ENCODE measurements at regions of chr11 and their contacts with region 1.

Region 1: DNA sequence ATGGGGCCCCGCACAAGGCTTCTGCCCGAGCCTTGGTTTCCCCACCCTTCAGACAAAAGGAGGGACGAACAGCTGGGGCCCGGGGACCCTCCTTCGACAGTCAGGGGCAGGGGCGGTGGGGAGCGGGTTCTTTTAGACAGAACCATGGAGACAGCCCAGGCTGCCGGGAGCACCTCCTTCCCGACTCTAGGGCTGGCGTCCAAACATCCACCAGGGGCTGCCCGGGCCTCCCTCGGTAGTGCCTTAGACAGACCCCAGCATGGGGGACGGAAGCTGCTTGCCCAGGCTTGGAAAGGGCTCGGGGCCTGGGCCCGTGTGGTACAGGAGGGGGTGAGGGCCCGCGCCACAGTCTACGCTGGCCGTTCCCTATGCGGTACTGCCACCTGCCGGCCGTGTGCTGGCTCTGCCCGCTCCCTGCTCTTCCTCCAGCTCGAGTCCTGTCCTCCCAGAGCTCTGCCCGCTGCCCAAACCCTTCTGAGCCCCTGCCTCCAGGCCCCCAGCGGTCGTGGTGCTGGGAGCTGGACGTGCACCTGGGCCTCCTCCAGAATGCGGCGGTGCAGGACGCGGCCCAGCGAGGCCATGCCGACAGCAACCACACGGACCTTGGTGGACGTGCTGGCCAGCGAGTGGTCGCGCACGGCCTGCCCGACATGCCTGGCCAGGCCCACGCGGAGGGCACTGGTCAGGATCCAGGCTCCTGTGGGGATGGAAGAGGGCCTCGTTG is 20.1 kb downstream of the TSSC4 start:
- DNase-seq: no peak
- ATAC-seq: peak; percentile 96
- H3K4me3 ChIP-seq: peak overlapping the region; percentile 3 to 42; a peak in 2 of 4 replicates
- H3K27ac ChIP-seq: peak overlapping the region; percentile 23; the same call in 1 of the 2 replicates
- H3K4me1 ChIP-seq: peaks cover 7% of the 10 kb centered on the region; the same call in 1 of the 2 replicates
- H3K27me3 ChIP-seq: no peaks in the 10 kb centered on the region
- CTCF ChIP-seq: peak; percentile 99

Region 2: GRCh38 chr11:1733716-1734640 is 686.7 kb before region 1 on chr11:
- CTCF ChIA-PET with region 1: no interaction called
- POLR2A ChIA-PET with region 1: no interaction called
- in situ Hi-C with region 1: no loop called
- intact Hi-C with region 1: no loop called
- DNase-seq: no peak
- ATAC-seq: peak; percentile 20
- H3K4me3 ChIP-seq: no peak overlapping the region
- H3K27ac ChIP-seq: no peak overlapping the region
- H3K4me1 ChIP-seq: no peaks in the 10 kb centered on the region
- H3K27me3 ChIP-seq: peaks cover 5% of the 10 kb centered on the region; the same call in 1 of the 2 replicates
- CTCF ChIP-seq: no peak

Region 3: DNA sequence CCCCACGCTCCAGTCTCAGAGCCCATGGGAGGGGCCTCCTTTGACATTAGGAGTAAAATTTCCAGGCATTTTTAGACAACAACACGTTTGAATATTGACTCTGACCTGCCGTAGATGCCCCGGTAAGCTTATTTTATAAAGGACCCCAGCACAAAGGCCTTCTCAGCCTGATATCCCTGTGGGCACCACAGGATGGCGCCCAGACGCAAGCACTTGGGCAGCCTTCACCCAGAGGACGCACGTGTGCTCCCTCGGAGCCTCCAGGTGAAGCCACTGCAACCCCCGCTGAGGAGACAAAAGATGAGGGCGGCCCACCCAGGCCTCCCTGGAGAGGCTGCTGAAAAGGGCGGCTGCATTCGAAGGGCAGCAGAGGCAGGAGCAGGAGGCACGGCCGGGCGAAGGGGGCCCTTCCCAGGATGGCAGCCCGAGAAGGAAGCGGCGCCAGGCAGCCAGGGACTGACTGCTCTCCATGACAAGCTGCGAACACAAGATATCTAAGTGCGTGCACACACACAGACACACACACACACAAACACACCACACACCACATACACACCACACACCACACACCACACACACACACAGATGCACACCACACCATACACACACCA is 233.9 kb before region 1 on chr11:
- CTCF ChIA-PET with region 1: interaction called, 17 read pairs
- POLR2A ChIA-PET with region 1: no interaction called
- in situ Hi-C with region 1: no loop called
- intact Hi-C with region 1: no loop called
- DNase-seq: no peak
- ATAC-seq: peak; percentile 85
- H3K4me3 ChIP-seq: no peak overlapping the region
- H3K27ac ChIP-seq: no peak overlapping the region
- H3K4me1 ChIP-seq: 0 out of 2 replicates have a peak, but pooled peaks cover 3% of the 10 kb centered on the region
- H3K27me3 ChIP-seq: no peaks in the 10 kb centered on the region
- CTCF ChIP-seq: peak; percentile 97

Region 4: DNA sequence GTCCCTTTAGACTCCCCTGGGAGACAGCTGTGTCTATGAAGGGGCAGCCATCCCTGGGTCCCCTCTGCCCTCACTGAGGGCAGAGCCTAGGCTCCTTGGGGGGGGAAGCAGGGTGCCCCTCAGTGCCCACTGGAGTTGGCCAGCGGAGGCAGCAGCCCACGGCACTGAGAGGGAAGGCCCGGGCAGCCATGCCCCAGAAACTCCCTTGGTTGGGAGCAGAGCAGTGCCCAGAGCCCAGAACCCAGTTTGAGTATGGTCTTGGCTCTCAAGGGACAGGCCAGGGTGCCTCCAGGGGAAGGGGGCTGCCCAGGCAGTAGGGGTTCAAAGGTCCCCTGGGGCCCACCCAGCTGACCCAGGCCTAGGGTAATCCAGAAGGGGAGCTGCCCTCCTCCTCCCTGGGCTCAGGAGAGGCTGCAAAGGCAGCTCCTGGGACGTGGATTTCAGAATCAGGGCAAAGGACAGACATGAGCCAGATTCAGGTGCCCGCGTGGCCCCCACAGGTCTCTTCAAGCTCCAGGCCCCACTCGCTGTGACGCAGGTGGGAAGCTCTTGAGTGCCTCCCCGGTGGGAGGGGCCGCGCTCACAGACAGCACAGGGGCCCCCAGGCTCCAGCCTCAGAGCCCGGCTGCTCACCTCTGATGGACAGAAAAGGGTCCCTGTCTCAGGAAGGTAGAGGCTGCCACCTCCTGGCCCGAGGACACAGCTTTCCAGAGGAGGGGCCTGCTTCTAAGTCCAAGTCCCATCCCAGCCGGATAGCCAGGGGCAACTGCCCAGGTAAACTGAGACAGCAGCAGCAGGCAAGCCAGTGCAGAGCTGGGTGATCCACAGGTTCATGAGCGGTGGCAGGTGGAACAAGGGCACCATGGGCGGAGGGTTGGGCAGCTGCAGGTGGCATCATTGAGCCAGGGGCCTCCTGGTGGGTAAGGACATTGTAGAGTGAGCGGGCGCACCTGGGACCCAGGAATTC is 121.6 kb before region 1 on chr11:
- CTCF ChIA-PET with region 1: interaction called, 102 read pairs
- POLR2A ChIA-PET with region 1: no interaction called
- in situ Hi-C with region 1: no loop called
- intact Hi-C with region 1: no loop called
- DNase-seq: no peak
- ATAC-seq: peak; percentile 82
- H3K4me3 ChIP-seq: no peak overlapping the region
- H3K27ac ChIP-seq: no peak overlapping the region
- H3K4me1 ChIP-seq: no peaks in the 10 kb centered on the region
- H3K27me3 ChIP-seq: peaks cover 5% of the 10 kb centered on the region; the same call in 1 of the 2 replicates
- CTCF ChIP-seq: peak; percentile 92

Region 5: GRCh38 chr11:2400069-2400760 is 20.4 kb before region 1 on chr11 and contains the start of gene TSSC4:
- CTCF ChIA-PET with region 1: interaction called, 58 read pairs
- POLR2A ChIA-PET with region 1: no interaction called
- in situ Hi-C with region 1: no loop called
- intact Hi-C with region 1: loop called (anchors 1 kb)
- DNase-seq: peak; percentile 100
- ATAC-seq: peak; percentile 92
- H3K4me3 ChIP-seq: peak within 1 kb of the TSS; percentile 93 to 100
- H3K27ac ChIP-seq: peak within 1 kb of the TSS; percentile 97
- H3K4me1 ChIP-seq: peaks cover 20% of the 10 kb centered on the region
- H3K27me3 ChIP-seq: no peaks in the 10 kb centered on the region
- CTCF ChIP-seq: peak; percentile 100
- total RNA-seq, gene TSSC4: 132 TPM

Region 6: GRCh38 chr11:2532704-2533586 is 112.3 kb after region 1 on chr11:
- CTCF ChIA-PET with region 1: interaction called, 24 read pairs
- POLR2A ChIA-PET with region 1: no interaction called
- in situ Hi-C with region 1: no loop called
- intact Hi-C with region 1: no loop called
- DNase-seq: peak; percentile 84
- ATAC-seq: peak; percentile 85
- H3K4me3 ChIP-seq: peak overlapping the region in 1 of 2 experiments; percentile 30; a peak in 1 of 4 replicates
- H3K27ac ChIP-seq: no peak overlapping the region
- H3K4me1 ChIP-seq: peaks cover 15% of the 10 kb centered on the region
- H3K27me3 ChIP-seq: no peaks in the 10 kb centered on the region
- CTCF ChIP-seq: peak; percentile 100

Region 7: DNA sequence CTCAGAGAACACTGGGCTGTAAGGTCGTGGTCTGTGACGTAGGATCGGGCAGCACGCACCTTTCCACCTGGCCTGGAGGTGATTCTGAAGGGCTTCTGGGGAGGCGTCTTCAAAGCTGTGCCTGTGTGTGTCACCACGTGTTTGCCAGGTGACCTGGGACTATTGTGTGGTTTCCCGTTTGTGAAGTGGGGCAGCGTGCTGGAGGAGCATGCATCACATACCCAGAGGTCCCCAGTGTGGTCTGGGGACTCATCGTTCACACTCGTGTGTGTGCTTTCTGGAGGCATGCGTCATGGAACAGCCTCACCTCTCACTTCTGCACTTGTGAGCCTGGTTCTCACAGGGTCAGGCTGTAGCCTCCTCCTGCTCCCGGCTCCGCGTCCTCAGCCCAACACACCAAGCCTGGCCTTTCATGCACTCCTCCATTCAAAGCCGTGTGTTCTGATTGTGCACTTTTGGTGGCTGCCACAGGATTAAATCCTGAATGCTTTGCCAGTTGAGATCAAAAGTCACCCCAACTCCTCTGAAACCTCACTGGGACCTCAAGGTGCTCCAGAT is 172.8 kb after region 1 on chr11:
- CTCF ChIA-PET with region 1: no interaction called
- POLR2A ChIA-PET with region 1: no interaction called
- in situ Hi-C with region 1: no loop called
- intact Hi-C with region 1: no loop called
- DNase-seq: no peak
- ATAC-seq: no peak
- H3K4me3 ChIP-seq: no peak overlapping the region
- H3K27ac ChIP-seq: no peak overlapping the region
- H3K4me1 ChIP-seq: no peaks in the 10 kb centered on the region
- H3K27me3 ChIP-seq: peaks cover 11% of the 10 kb centered on the region; the same call in 1 of the 2 replicates
- CTCF ChIP-seq: no peak

Region 8: DNA sequence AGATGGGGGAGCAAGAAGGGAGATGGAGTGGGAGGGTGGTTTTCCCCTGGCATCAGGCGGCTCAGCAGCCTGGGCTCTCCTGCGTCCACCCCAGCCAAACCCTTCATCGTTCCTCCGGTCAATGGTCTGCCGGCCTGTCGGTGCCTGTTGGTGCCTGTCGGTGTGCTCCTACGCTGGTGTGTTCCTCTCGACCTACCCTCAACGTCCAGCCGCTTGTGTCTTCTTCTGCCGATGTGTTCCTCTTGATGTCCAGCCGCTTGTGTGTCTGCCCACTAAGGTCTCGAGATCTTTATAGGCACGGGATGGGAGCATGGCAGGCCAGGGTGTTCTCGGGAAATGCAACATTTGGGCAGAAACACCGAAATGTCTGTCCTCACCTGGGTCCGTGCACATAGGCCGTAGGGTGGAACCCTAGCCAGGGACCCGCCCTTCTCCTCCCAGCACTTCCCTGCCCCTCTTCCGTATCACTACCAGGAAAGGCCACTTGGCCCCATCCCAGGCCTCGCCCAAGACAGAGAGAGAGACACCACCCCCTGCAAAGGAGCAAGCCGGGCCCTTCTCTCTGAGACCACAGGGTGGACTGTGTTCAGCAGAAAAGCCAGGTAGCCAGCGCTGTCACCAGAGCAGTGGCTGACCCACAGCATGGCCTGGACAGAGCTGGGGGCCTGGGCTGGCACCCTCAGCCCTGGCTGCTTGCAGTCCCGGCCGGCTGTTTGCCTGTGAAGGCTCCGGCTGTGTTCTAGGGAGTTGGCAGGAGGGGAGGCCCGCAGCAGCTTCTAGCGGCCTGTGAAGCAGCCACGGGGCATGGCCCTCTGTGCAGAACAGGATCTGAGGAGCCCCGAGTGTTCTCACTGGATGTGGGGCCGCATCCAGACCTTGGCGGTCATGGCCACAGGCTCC is 340.7 kb after region 1 on chr11:
- CTCF ChIA-PET with region 1: no interaction called
- POLR2A ChIA-PET with region 1: no interaction called
- in situ Hi-C with region 1: no loop called
- intact Hi-C with region 1: no loop called
- DNase-seq: no peak
- ATAC-seq: peak; percentile 54
- H3K4me3 ChIP-seq: no peak overlapping the region
- H3K27ac ChIP-seq: no peak overlapping the region
- H3K4me1 ChIP-seq: no peaks in the 10 kb centered on the region
- H3K27me3 ChIP-seq: peaks cover 13% of the 10 kb centered on the region; the same call in 1 of the 2 replicates
- CTCF ChIP-seq: no peak